A673 (cell line): ENCODE measurements at regions of chr5 and their contacts with region 1.

Region 1: GRCh38 chr5:139517683-139518564 is 35.4 kb upstream of the STING1 start:
- DNase-seq: peak; percentile 86
- H3K4me3 ChIP-seq: peak overlapping the region; percentile 46
- H3K27ac ChIP-seq: no peak overlapping the region
- H3K4me1 ChIP-seq: peaks cover 3% of the 10 kb centered on the region
- H3K27me3 ChIP-seq: no peaks in the 10 kb centered on the region
- CTCF ChIP-seq: peak; percentile 98

Region 2: GRCh38 chr5:139232147-139232724 is 285.7 kb before region 1 on chr5:
- CTCF ChIA-PET with region 1: no interaction called
- POLR2A ChIA-PET with region 1: no interaction called
- intact Hi-C with region 1: no loop called
- DNase-seq: no peak
- H3K4me3 ChIP-seq: no peak overlapping the region
- H3K27ac ChIP-seq: no peak overlapping the region
- H3K4me1 ChIP-seq: no peaks in the 10 kb centered on the region
- H3K27me3 ChIP-seq: no peaks in the 10 kb centered on the region
- CTCF ChIP-seq: no peak

Region 3: GRCh38 chr5:139422307-139422893 is 95.5 kb before region 1 on chr5:
- CTCF ChIA-PET with region 1: interaction called, 16 read pairs
- POLR2A ChIA-PET with region 1: no interaction called
- intact Hi-C with region 1: loop called (anchors 1 kb)
- DNase-seq: peak; percentile 77
- H3K4me3 ChIP-seq: no peak overlapping the region
- H3K27ac ChIP-seq: no peak overlapping the region
- H3K4me1 ChIP-seq: peaks cover 7% of the 10 kb centered on the region
- H3K27me3 ChIP-seq: no peaks in the 10 kb centered on the region
- CTCF ChIP-seq: peak; percentile 94

Region 4: GRCh38 chr5:139592289-139592688 is 74.4 kb after region 1 on chr5:
- CTCF ChIA-PET with region 1: interaction called, 10 read pairs
- POLR2A ChIA-PET with region 1: interaction called, 5 read pairs
- intact Hi-C with region 1: no loop called
- DNase-seq: no peak
- H3K4me3 ChIP-seq: no peak overlapping the region
- H3K27ac ChIP-seq: no peak overlapping the region
- H3K4me1 ChIP-seq: peaks cover 4% of the 10 kb centered on the region
- H3K27me3 ChIP-seq: no peaks in the 10 kb centered on the region
- CTCF ChIP-seq: no peak